Adrenal gland (tissue), 19 donors: ENCODE measurements at regions of chr2 and their contacts with region 1.

Region 1: GRCh38 chr2:13006829-13007717 is 290.3 kb downstream of the TRIB2 start:
- DNase-seq: peak; percentile 50 to 85 (median 68)
- H3K4me3 ChIP-seq: peak overlapping the region in 1 of 4 donors; percentile 15
- H3K27ac ChIP-seq: peak overlapping the region in 2 of 5 donors; percentile 15 to 19
- H3K4me1 ChIP-seq: peaks cover 0 to 11% of the 10 kb centered on the region in 2 donors
- H3K27me3 ChIP-seq: no peaks in the 10 kb centered on the region
- CTCF ChIP-seq: peak; percentile 82 to 95 (median 90)
- POLR2A ChIP-seq: no peak

Region 2: GRCh38 chr2:11829947-11830707 is 1176.9 kb before region 1 on chr2:
- intact Hi-C with region 1: loop called in 1 of 2 experiments (anchors 10 kb)
- DNase-seq: peak; percentile 74 to 87 (median 82)
- H3K4me3 ChIP-seq: peak overlapping the region in 2 of 4 donors; percentile 10 to 41
- H3K27ac ChIP-seq: peak overlapping the region; percentile 12 to 90 (median 79)
- H3K4me1 ChIP-seq: peaks cover 21 to 29% of the 10 kb centered on the region in 2 donors
- H3K27me3 ChIP-seq: no peaks in the 10 kb centered on the region
- CTCF ChIP-seq: no peak
- POLR2A ChIP-seq: peak in 1 of 2 donors; percentile 63

Region 3: DNA sequence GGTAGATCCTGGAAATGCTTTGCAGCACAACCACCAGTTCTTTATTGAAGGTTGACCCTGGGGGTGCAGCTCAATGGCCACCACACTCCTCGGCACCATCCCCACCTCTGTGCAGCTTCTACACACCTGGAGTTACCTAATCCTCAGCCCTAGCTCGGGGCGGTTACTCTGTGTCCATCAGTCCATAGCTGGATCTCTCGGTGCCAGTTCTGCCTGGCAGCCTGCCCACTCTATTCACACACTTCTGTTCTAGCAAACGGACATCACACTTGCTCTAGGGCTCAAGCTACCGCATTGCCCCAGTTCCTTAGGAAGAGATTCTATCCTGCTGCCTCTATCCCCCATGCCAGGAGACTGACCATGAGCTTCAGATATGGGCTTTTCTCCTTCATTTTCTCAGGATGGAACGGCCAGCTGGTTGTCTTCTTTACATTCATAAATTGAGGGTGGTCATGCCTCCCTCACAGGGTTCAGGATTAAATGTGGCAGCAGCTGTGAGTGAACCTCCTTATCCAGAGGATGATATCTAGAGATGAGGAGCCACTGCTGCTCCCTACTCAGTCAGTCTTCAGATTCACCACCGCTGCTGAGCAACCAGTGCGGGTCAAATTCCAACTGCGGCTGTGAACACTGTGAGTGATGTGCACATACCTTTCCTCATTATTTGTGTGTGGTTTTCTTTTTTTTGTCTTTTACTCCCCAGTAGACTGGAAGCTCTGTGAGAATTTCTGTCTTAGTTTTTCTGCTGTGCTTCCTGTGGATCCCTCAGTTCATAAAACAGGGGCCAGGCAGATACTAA is 357.3 kb before region 1 on chr2:
- intact Hi-C with region 1: no loop called
- DNase-seq: peak in 3 of 7 donors; percentile 22 to 40 (median 30)
- H3K4me3 ChIP-seq: no peak overlapping the region
- H3K27ac ChIP-seq: no peak overlapping the region
- H3K4me1 ChIP-seq: no peaks in the 10 kb centered on the region
- H3K27me3 ChIP-seq: no peaks in the 10 kb centered on the region
- CTCF ChIP-seq: no peak
- POLR2A ChIP-seq: no peak

Region 4: GRCh38 chr2:12728221-12728777 is 278.8 kb before region 1 on chr2:
- intact Hi-C with region 1: loop called (anchors 5 to 10 kb)
- DNase-seq: no peak
- H3K4me3 ChIP-seq: no peak overlapping the region
- H3K27ac ChIP-seq: peak overlapping the region in 1 of 5 donors; percentile 67
- H3K4me1 ChIP-seq: peaks cover 24 to 79% of the 10 kb centered on the region in 2 donors
- H3K27me3 ChIP-seq: no peaks in the 10 kb centered on the region
- CTCF ChIP-seq: no peak
- POLR2A ChIP-seq: no peak

Region 5: GRCh38 chr2:12931186-12931844 is 75.8 kb before region 1 on chr2:
- intact Hi-C with region 1: loop called in 1 of 2 experiments (anchors 10 kb)
- DNase-seq: peak in 5 of 7 donors; percentile 17 to 32 (median 20)
- H3K4me3 ChIP-seq: no peak overlapping the region
- H3K27ac ChIP-seq: peak overlapping the region in 2 of 5 donors; percentile 10 to 35
- H3K4me1 ChIP-seq: peaks cover 4 to 19% of the 10 kb centered on the region in 2 donors
- H3K27me3 ChIP-seq: no peaks in the 10 kb centered on the region
- CTCF ChIP-seq: peak; percentile 74 to 89 (median 82)
- POLR2A ChIP-seq: no peak